ENCODE measurements at regions of chr12 and their contacts with region 1.

Region 1: GRCh38 chr12:13100882-13101769 is 2.3 kb downstream of the GSG1 start:
- DNase-seq: peak; percentile 98 to 99 (median 98)
- H3K4me3 ChIP-seq: peak overlapping the region; percentile 52 to 73 (median 54)
- H3K4me3 Mint-ChIP-seq: peak overlapping the region; percentile 74 to 87
- H3K27ac ChIP-seq: peak overlapping the region; percentile 94 to 98
- H3K27ac Mint-ChIP-seq: peak overlapping the region; percentile 98 to 100 (median 100)
- H3K4me1 ChIP-seq: peaks cover 59 to 60% of the 10 kb centered on the region in 2 donors
- H3K4me1 Mint-ChIP-seq: peaks cover 67% of the 10 kb centered on the region
- H3K27me3 ChIP-seq: no peaks in the 10 kb centered on the region
- H3K27me3 Mint-ChIP-seq: peaks cover 0 to 8% (median 1%) of the 10 kb centered on the region in 3 donors
- CTCF ChIP-seq: no peak

Region 2: GRCh38 chr12:12999959-13000615 is 101.0 kb before region 1 on chr12 and contains the start of gene HEBP1:
- intact Hi-C with region 1: loop called (anchors 5 kb)
- DNase-seq: peak; percentile 87 to 94 (median 92)
- H3K4me3 ChIP-seq: peak within 1 kb of the TSS; percentile 77 to 91 (median 89)
- H3K4me3 Mint-ChIP-seq: peak within 1 kb of the TSS; percentile 91 to 98
- H3K27ac ChIP-seq: peak within 1 kb of the TSS; percentile 95 to 97
- H3K27ac Mint-ChIP-seq: peak within 1 kb of the TSS; percentile 96 to 99 (median 98)
- H3K4me1 ChIP-seq: peaks cover 39 to 44% of the 10 kb centered on the region in 2 donors
- H3K4me1 Mint-ChIP-seq: peaks cover 68% of the 10 kb centered on the region
- H3K27me3 ChIP-seq: no peaks in the 10 kb centered on the region
- H3K27me3 Mint-ChIP-seq: peaks cover 0 to 3% (median 0%) of the 10 kb centered on the region in 3 donors
- CTCF ChIP-seq: no peak
- polyA plus RNA-seq, gene HEBP1: 33.4 to 89.3 (median 71.3) TPM

Region 3: DNA sequence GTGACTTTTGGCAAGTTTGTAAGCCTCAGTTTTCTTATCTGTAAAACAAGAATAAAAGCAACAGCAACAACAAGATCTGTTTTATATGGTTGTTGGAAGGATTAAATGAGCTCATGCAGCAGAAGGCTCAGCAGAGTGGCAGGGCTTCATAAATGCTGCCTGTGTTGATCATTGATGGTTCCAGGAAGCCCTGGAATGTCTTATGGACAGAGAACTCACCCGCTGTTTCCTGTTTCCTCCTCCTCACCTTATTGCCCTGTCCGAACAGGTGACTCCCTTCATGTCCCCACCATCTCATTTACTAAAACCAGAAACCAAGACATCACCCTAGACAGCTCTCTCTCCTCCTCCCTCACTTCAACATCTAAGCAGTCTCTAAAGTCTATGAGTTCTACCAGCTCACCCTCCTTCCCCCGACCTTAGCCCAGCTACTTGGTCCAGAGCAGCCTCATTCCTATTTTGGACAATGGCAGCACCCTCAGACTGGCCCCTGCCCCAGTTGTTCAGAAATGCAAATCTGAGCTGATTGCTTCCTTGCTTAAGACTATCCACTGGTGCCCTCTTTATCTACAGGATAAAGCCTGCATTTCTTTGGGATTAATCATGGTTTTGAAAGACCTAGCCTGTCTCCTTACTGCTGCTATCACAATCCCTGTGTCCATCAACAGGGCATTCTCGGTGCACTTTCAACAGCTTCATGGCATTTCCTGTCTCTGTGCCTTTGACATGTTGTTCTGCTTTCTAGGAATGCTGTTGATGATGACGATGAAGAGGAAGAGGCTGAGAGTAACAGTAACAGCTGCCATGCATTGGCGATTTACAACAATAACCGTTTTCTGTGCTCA is 23.8 kb after region 1 on chr12:
- intact Hi-C with region 1: no loop called
- DNase-seq: peak in 2 of 3 donors; percentile 11 to 13
- H3K4me3 ChIP-seq: no peak overlapping the region
- H3K4me3 Mint-ChIP-seq: no peak overlapping the region
- H3K27ac ChIP-seq: no peak overlapping the region
- H3K27ac Mint-ChIP-seq: peak overlapping the region in 2 of 7 donors; percentile 1 to 77
- H3K4me1 ChIP-seq: no peaks in the 10 kb centered on the region
- H3K4me1 Mint-ChIP-seq: peaks cover 4% of the 10 kb centered on the region
- H3K27me3 ChIP-seq: no peaks in the 10 kb centered on the region
- H3K27me3 Mint-ChIP-seq: peaks cover 0 to 1% (median 0%) of the 10 kb centered on the region in 3 donors
- CTCF ChIP-seq: no peak

Region 4: GRCh38 chr12:13165617-13166041 is 64.5 kb after region 1 on chr12:
- intact Hi-C with region 1: loop called (anchors 1 to 10 kb)
- DNase-seq: peak; percentile 76 to 88 (median 86)
- H3K4me3 ChIP-seq: peak overlapping the region in 1 of 3 experiments; percentile 29
- H3K4me3 Mint-ChIP-seq: no peak overlapping the region
- H3K27ac ChIP-seq: peak overlapping the region; percentile 37 to 65
- H3K27ac Mint-ChIP-seq: peak overlapping the region in 6 of 7 donors; percentile 39 to 80 (median 74)
- H3K4me1 ChIP-seq: peaks cover 32 to 34% of the 10 kb centered on the region in 2 donors
- H3K4me1 Mint-ChIP-seq: peaks cover 44% of the 10 kb centered on the region
- H3K27me3 ChIP-seq: no peaks in the 10 kb centered on the region
- H3K27me3 Mint-ChIP-seq: peaks cover 0 to 5% (median 0%) of the 10 kb centered on the region in 3 donors
- CTCF ChIP-seq: no peak

Region 5: DNA sequence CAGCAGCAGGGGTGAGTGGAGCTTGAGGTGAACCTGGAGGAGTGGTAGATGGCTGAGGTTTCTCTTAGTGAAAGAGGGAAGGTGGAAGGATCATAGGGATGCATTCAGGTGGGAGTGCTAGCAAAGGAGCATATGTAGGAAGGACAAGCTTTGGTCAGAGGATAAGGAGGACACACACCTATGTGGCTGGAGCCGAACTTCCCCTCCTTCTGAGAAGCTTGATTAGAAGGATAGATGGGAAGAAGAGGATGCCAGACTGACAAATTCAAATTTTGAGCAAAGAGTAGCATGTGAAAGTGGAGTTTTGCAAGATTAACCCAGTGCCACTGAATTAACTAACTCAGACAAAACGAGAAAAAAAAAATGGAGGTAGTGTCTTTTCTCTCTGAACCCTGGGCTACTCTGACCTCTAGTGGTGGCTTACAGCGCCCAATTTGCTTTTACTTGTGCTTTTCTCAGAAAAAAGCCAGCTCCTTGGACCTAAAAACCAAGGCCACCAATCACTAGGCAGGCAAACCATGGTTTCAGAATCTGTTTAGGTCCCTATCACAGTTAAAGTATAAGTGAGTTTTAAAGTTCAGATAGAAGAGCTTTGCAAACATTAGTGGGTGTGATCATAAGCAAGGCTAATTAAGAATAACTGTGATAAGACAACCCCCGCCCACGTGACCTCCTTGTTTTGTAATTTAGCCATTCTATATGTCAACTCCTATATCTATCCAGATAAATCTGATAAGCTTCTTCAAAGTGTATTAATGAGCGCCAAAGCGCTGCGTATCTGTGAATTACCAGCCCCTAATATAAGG is 110.9 kb after region 1 on chr12:
- intact Hi-C with region 1: loop called in 1 of 2 experiments (anchors 5 kb)
- DNase-seq: peak; percentile 62 to 79 (median 70)
- H3K4me3 ChIP-seq: no peak overlapping the region
- H3K4me3 Mint-ChIP-seq: peak overlapping the region in 1 of 2 donors; percentile 62
- H3K27ac ChIP-seq: no peak overlapping the region
- H3K27ac Mint-ChIP-seq: peak overlapping the region in 3 of 7 donors; percentile 5 to 15 (median 14)
- H3K4me1 ChIP-seq: peaks cover 20 to 21% of the 10 kb centered on the region in 2 donors
- H3K4me1 Mint-ChIP-seq: peaks cover 25% of the 10 kb centered on the region
- H3K27me3 ChIP-seq: no peaks in the 10 kb centered on the region
- H3K27me3 Mint-ChIP-seq: peaks cover 0 to 11% (median 7%) of the 10 kb centered on the region in 3 donors
- CTCF ChIP-seq: peak; percentile 81

Measured in CD14-positive monocyte (primary cell).